ENCODE measurements at regions of chr2 and their contacts with region 1.

Region 1: DNA sequence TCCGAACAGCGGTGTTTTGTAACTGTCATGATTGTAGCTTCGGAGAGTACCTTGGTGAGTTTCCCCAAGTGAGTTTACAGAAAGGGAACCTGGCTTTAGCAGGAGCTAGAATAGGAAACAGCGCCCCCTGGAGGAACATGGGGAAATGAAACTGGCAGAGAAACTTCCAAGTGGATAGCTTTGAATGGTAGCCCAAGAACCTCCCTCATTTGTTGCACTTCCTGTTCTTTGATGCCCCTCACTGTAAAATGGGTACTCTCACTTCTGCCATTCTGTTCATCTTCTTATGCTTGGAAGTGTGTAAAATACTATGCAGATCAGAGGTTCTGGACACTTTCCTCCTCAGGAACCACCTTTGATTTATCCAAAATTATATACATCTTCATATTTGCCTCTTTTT is 36.2 kb downstream of the CHST10 start:
- DNase-seq: peak; percentile 88
- ATAC-seq: peak; percentile 64
- H3K4me3 Mint-ChIP-seq: no peak overlapping the region
- H3K27ac Mint-ChIP-seq: no peak overlapping the region
- H3K4me1 Mint-ChIP-seq: peaks cover 2% of the 10 kb centered on the region
- H3K27me3 Mint-ChIP-seq: no peaks in the 10 kb centered on the region
- CTCF ChIP-seq: peak; percentile 91

Region 2: DNA sequence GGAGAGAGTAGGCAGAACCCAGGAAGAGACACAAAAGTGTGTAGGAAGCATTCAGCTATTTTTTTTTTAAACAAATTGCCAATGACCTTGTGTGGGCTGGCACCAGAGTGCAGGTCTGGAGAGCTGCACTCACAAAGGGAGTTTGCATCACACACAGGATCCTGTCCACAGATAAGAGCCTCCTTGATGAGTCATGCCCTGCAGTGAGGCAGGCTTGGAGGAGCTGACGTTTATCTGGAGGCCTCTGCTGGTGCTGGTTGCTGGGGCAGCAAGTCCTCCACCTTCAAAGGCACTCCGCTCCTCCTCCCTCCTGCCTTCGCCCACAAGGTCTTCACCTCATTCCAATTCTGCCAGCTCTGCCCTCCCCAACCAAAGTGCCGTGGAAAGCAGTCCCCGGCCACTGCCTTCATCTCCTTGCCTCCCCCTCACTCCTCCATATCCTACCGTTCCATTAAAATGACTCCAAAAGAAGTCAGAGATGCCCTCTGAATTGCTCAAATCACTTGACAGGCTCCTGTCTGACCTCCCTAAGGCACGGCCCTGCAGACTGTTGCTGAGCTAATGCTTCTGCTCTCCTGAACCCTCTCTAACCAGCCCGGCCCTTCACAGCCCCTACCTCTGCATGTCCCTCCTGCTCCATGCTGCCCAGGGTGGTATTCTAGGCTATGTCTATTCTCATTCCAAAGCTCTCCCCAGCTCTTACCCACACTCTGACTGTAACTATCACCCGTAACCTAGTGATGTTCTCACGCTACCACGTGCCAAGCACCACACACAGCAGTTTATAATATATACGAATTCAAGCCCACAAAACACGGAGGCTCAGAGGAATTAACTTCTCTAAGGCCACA is 89.9 kb before region 1 on chr2:
- CTCF ChIA-PET with region 1: interaction called, 13 read pairs
- POLR2A ChIA-PET with region 1: no interaction called
- intact Hi-C with region 1: no loop called
- DNase-seq: peak; percentile 81
- ATAC-seq: peak; percentile 93
- H3K4me3 Mint-ChIP-seq: no peak overlapping the region
- H3K27ac Mint-ChIP-seq: no peak overlapping the region
- H3K4me1 Mint-ChIP-seq: no peaks in the 10 kb centered on the region
- H3K27me3 Mint-ChIP-seq: peaks cover 5% of the 10 kb centered on the region
- CTCF ChIP-seq: no peak

Region 3: DNA sequence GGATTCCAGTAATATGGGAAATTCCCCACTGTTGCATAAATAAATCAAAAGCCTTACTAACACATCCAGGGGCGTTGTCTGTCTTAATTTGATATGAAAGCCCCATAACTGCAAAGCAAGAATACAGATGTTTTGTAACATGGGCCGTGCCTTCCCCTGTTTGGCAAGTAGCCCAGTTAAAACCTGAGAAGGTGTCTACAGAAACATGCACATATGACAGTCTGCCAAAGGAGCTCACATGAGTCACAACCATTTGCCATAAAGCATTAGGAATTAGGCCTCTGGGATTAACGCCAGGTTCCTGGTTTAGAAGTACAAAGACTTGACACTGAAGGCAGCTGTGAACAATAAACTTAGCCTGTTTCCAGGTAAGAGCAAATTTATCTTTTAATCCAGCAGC is 15.8 kb before region 1 on chr2:
- CTCF ChIA-PET with region 1: interaction called, 19 read pairs
- POLR2A ChIA-PET with region 1: no interaction called
- intact Hi-C with region 1: no loop called
- DNase-seq: no peak
- ATAC-seq: no peak
- H3K4me3 Mint-ChIP-seq: no peak overlapping the region
- H3K27ac Mint-ChIP-seq: no peak overlapping the region
- H3K4me1 Mint-ChIP-seq: no peaks in the 10 kb centered on the region
- H3K27me3 Mint-ChIP-seq: peaks cover 7% of the 10 kb centered on the region
- CTCF ChIP-seq: no peak

Region 4: DNA sequence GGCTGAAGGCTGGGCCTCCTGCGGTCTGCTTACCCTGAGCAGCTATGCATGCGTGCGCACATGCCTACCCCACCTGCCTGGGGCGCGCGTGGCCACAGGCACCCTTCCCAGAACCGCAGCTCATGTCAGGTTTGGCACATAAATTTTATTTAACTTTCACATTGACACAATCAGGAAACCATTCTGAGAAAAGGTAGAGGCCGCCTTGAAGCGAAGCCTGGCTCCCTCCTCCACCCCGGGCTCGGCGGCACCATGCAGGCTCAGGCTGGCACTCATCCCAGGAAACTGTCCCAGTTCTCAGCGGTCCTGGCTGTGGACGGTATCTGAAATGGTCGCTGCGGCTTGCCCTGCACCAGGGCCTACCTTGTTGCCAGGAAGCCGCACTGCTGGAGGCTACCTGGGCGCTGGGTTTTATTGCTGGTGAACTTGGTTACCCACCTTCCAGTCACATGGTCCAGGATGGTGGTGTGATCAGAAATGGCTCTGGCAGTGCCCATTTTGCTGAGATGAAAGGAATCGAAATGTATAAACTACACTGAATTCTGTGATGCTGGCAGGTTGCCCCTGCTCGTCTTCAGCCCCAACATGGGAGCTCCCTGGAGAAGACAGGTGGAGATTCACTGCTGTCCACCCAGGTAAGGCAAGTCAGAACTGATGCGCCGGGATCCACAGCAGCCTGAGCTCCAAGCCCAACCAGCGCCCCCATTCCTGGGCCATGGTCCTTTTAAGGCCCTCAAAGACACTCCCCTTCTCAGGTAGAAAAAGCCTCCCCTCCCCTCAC is 10.7 kb after region 1 on chr2:
- CTCF ChIA-PET with region 1: interaction called, 27 read pairs
- POLR2A ChIA-PET with region 1: no interaction called
- intact Hi-C with region 1: no loop called
- DNase-seq: no peak
- ATAC-seq: no peak
- H3K4me3 Mint-ChIP-seq: no peak overlapping the region
- H3K27ac Mint-ChIP-seq: no peak overlapping the region
- H3K4me1 Mint-ChIP-seq: no peaks in the 10 kb centered on the region
- H3K27me3 Mint-ChIP-seq: no peaks in the 10 kb centered on the region
- CTCF ChIP-seq: no peak

Measured in activated CD8-positive, alpha-beta T cell treated with anti-CD3 and anti-CD28 coated beads for 36 hours (primary cell).